ENCODE measurements at regions of chr1 and their contacts with region 1.

Region 1: DNA sequence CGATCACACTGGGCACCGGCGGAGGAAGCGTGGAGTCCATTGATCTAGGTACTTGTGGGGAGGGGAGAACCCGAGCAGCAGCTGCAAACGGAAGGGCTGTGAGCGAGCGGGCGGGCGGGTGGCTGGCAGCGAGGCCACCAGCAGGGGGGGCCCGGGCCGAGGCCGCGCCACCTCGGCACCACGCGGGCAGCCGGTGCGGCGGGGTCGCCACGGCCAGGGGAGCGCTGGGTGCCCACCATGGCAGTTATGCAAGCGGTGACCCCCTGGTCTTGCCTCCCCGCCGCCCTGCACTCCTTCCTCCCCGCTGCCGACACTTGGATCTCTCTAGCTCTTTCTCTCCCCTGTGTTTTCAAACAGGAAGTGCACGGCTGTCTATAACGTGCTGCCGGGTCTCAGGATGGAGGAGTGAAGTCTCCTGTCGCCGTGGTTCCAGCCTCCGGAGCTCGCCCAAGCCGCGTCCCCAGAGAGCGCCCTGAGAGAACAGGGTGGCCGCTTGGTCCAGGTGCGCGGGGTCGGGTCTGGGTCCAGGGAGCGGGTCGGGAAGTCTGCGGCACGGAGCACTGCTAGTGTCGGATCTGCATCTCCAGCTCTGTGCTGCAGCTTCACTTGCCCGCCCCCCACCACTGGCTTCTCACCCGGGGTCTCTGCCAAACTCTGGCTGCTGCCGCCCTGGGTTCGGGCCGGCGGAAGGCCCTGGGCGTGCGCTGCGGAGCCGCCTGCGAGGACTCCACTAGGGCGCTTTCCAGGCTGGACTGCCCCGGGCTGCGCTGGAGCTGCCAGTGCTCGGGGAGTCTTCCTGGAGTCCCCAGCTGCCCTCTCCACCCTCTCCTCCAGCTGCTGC is 22.7 kb downstream of the LRRC8D start:
- DNase-seq: peak; percentile 86
- H3K4me3 Mint-ChIP-seq: peak overlapping the region; percentile 91
- H3K27ac Mint-ChIP-seq: peak overlapping the region; percentile 94
- H3K4me1 Mint-ChIP-seq: peaks cover 47% of the 10 kb centered on the region
- H3K27me3 Mint-ChIP-seq: no peaks in the 10 kb centered on the region

Region 2: GRCh38 chr1:89547563-89548485 is 295.7 kb before region 1 on chr1:
- CTCF ChIA-PET with region 1: no interaction called
- intact Hi-C with region 1: loop called (anchors 2 kb)
- DNase-seq: peak; percentile 56
- H3K4me3 Mint-ChIP-seq: no peak overlapping the region
- H3K27ac Mint-ChIP-seq: peak overlapping the region; percentile 95
- H3K4me1 Mint-ChIP-seq: peaks cover 84% of the 10 kb centered on the region
- H3K27me3 Mint-ChIP-seq: no peaks in the 10 kb centered on the region

Region 3: DNA sequence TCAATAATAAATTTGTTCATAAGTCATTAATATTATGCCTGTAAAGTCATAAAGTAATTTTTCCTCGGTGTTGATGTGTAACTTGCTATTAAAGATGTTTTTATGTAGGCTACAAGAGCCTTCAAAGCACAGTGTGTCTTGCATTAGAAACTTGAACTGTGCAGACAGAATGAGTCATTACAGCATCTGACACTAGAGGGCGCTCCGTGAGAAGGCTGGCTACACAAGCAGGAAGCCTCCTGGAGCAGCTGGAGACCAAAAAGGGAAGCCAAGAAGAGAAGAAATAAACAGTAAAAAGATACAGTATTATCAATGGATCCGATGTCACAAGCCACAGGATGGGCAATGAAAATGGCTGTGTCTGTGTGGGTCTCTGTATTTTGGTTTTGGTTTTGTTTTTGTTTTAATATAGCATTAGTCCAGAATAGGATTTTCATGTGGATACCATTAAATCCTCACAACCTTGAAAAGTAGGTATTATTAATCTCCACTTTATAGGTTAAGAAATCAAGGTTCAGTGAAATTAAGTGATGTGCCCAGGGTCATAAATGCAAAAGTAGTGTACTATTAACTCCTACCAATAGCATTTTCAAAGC is 38.8 kb before region 1 on chr1:
- CTCF ChIA-PET with region 1: interaction called, 10 read pairs
- intact Hi-C with region 1: loop called (anchors 1 kb)
- DNase-seq: peak; percentile 96
- H3K4me3 Mint-ChIP-seq: no peak overlapping the region
- H3K27ac Mint-ChIP-seq: no peak overlapping the region
- H3K4me1 Mint-ChIP-seq: no peaks in the 10 kb centered on the region
- H3K27me3 Mint-ChIP-seq: peaks cover 2% of the 10 kb centered on the region

Region 4: GRCh38 chr1:89877756-89878155 is 34.3 kb after region 1 on chr1:
- CTCF ChIA-PET with region 1: interaction called, 6 read pairs
- intact Hi-C with region 1: loop called (anchors 1 kb)
- DNase-seq: peak; percentile 27
- H3K4me3 Mint-ChIP-seq: no peak overlapping the region
- H3K27ac Mint-ChIP-seq: no peak overlapping the region
- H3K4me1 Mint-ChIP-seq: peaks cover 47% of the 10 kb centered on the region
- H3K27me3 Mint-ChIP-seq: no peaks in the 10 kb centered on the region

Region 5: GRCh38 chr1:89987170-89987819 is 143.8 kb after region 1 on chr1:
- CTCF ChIA-PET with region 1: interaction called, 9 read pairs
- intact Hi-C with region 1: loop called (anchors 1 kb)
- DNase-seq: peak; percentile 68
- H3K4me3 Mint-ChIP-seq: no peak overlapping the region
- H3K27ac Mint-ChIP-seq: no peak overlapping the region
- H3K4me1 Mint-ChIP-seq: peaks cover 12% of the 10 kb centered on the region
- H3K27me3 Mint-ChIP-seq: no peaks in the 10 kb centered on the region

Region 6: GRCh38 chr1:91555821-91556531 is 1712.5 kb after region 1 on chr1:
- CTCF ChIA-PET with region 1: no interaction called
- intact Hi-C with region 1: loop called (anchors 10 kb)
- DNase-seq: peak; percentile 84
- H3K4me3 Mint-ChIP-seq: peak overlapping the region; percentile 26
- H3K27ac Mint-ChIP-seq: peak overlapping the region; percentile 90
- H3K4me1 Mint-ChIP-seq: peaks cover 68% of the 10 kb centered on the region
- H3K27me3 Mint-ChIP-seq: no peaks in the 10 kb centered on the region

Measured in activated naive CD4-positive, alpha-beta T cell treated with anti-CD3 and anti-CD28 coated beads for 36 hours (primary cell).